CD4-positive, alpha-beta T cell (primary cell): ENCODE measurements at regions of chr9 and their contacts with region 1.

Region 1: GRCh38 chr9:137095664-137096517 is 9.1 kb downstream of the MAN1B1 start:
- DNase-seq: peak; percentile 78 to 95 (median 85)
- ATAC-seq: peak; percentile 98
- H3K4me3 ChIP-seq: peak overlapping the region; percentile 42
- H3K4me3 Mint-ChIP-seq: peak overlapping the region; percentile 86
- H3K27ac ChIP-seq: peak overlapping the region; percentile 59 to 85
- H3K27ac Mint-ChIP-seq: peak overlapping the region; percentile 92
- H3K4me1 ChIP-seq: peaks cover 28% of the 10 kb centered on the region
- H3K4me1 Mint-ChIP-seq: peaks cover 22% of the 10 kb centered on the region
- H3K27me3 ChIP-seq: no peaks in the 10 kb centered on the region
- H3K27me3 Mint-ChIP-seq: no peaks in the 10 kb centered on the region
- CTCF ChIP-seq: peak; percentile 80

Region 2: DNA sequence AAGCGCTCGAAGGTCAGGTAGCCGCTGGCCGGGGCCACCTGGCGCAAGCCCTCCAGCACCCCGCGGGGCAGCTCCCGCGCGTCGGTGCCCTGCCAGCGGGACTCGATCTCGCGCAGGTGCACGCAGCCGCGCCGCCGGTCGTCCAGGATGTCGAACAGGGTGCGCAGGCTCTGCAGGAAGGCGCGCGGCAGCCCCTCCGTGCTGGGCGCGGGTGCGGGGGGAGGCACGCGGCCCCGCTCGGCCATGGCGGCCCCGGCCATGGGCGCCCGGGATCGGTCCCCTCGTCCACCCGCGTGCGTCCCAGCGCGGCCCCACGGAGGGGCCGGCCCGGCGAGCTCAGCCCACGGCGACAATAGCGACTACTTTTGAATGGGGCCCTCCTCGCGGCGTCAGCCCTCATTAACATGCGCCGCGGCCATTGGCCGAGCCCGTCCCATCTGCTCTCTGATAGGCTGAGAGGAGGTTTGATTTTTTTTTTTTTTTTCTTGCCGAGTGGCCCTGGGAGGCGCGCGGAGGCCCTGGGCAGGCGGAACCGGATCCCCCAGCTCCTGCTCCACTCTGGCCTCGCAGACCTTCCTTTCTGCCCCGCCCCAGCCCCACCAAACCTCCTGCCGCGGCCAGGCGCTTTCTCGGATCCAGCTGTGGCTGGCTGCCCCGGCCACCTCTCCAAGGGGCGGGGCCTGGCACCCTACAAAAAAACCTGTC is 25.5 kb before region 1 on chr9 and contains the start of gene SAPCD2:
- CTCF ChIA-PET with region 1: interaction called, 5 read pairs
- POLR2A ChIA-PET with region 1: interaction called, 10 read pairs
- intact Hi-C with region 1: no loop called
- DNase-seq: peak; percentile 68 to 94 (median 78)
- ATAC-seq: peak; percentile 88
- H3K4me3 ChIP-seq: peak within 1 kb of the TSS; percentile 45
- H3K4me3 Mint-ChIP-seq: peak within 1 kb of the TSS; percentile 82
- H3K27ac ChIP-seq: no peak within 1 kb of the TSS
- H3K27ac Mint-ChIP-seq: peak within 1 kb of the TSS; percentile 24
- H3K4me1 ChIP-seq: peaks cover 28% of the 10 kb centered on the region
- H3K4me1 Mint-ChIP-seq: peaks cover 16% of the 10 kb centered on the region
- H3K27me3 ChIP-seq: peaks cover 0 to 8% of the 10 kb centered on the region in 2 experiments
- H3K27me3 Mint-ChIP-seq: peaks cover 4% of the 10 kb centered on the region
- CTCF ChIP-seq: no peak
- total RNA-seq, gene SAPCD2: 0.17 to 0.19 TPM

Region 3: GRCh38 chr9:137114610-137115391 is 18.9 kb after region 1 on chr9 and contains the start of gene DPP7:
- CTCF ChIA-PET with region 1: interaction called, 7 read pairs
- POLR2A ChIA-PET with region 1: interaction called, 7 read pairs
- intact Hi-C with region 1: loop called in 1 of 2 experiments (anchors 2 kb)
- DNase-seq: peak; percentile 58 to 92 (median 76)
- ATAC-seq: peak; percentile 94
- H3K4me3 ChIP-seq: peak within 1 kb of the TSS; percentile 54
- H3K4me3 Mint-ChIP-seq: peak within 1 kb of the TSS; percentile 79
- H3K27ac ChIP-seq: peak within 1 kb of the TSS in 1 of 2 donors; percentile 46
- H3K27ac Mint-ChIP-seq: peak within 1 kb of the TSS; percentile 44
- H3K4me1 ChIP-seq: peaks cover 28% of the 10 kb centered on the region
- H3K4me1 Mint-ChIP-seq: no peaks in the 10 kb centered on the region
- H3K27me3 ChIP-seq: no peaks in the 10 kb centered on the region
- H3K27me3 Mint-ChIP-seq: no peaks in the 10 kb centered on the region
- CTCF ChIP-seq: no peak
- total RNA-seq, gene DPP7: 344 to 349 TPM